Activated CD4-positive, alpha-beta T cell treated with anti-CD3 and anti-CD28 coated beads for 36 hours (primary cell): ENCODE measurements at regions of chr10 and their contacts with region 1.

Region 1: GRCh38 chr10:13074561-13075451 is 25.2 kb upstream of the OPTN start:
- DNase-seq: peak; percentile 84
- ATAC-seq: peak; percentile 80
- H3K4me3 Mint-ChIP-seq: no peak overlapping the region
- H3K27ac Mint-ChIP-seq: no peak overlapping the region
- H3K4me1 Mint-ChIP-seq: no peaks in the 10 kb centered on the region
- H3K27me3 Mint-ChIP-seq: peaks cover 19% of the 10 kb centered on the region

Region 2: DNA sequence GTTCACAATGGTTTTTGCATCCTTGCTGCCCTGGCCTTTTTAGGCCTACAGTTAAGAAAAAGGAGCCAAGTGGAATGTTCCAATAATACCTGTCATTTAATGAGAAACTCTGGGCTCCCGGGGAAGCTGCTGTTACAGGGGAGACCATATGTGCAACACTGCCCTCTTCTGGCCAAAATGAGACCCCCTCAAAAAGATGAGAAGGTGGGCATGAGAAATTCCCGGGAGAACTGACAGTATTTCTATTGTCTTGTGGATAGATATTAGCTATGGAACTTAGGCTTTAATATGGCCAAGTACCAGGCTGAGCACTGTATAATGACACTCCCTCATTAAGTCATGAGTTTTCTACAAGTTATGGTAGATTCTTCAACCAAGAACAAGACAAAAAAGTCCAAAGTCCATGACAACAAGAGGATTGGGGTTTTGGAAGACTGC is 172.7 kb before region 1 on chr10:
- CTCF ChIA-PET with region 1: interaction called, 3 read pairs
- POLR2A ChIA-PET with region 1: no interaction called
- intact Hi-C with region 1: loop called (anchors 5 to 10 kb)
- DNase-seq: peak; percentile 72
- ATAC-seq: peak; percentile 53
- H3K4me3 Mint-ChIP-seq: no peak overlapping the region
- H3K27ac Mint-ChIP-seq: no peak overlapping the region
- H3K4me1 Mint-ChIP-seq: no peaks in the 10 kb centered on the region
- H3K27me3 Mint-ChIP-seq: peaks cover 11% of the 10 kb centered on the region

Region 3: GRCh38 chr10:13152308-13152707 is 77.5 kb after region 1 on chr10:
- CTCF ChIA-PET with region 1: no interaction called
- POLR2A ChIA-PET with region 1: no interaction called
- intact Hi-C with region 1: no loop called
- DNase-seq: no peak
- ATAC-seq: no peak
- H3K4me3 Mint-ChIP-seq: no peak overlapping the region
- H3K27ac Mint-ChIP-seq: no peak overlapping the region
- H3K4me1 Mint-ChIP-seq: peaks cover under 1% of the 10 kb centered on the region
- H3K27me3 Mint-ChIP-seq: peaks cover 3% of the 10 kb centered on the region